ENCODE measurements at regions of chr2 and their contacts with region 1.

Region 1: GRCh38 chr2:43542285-43542937 is 53.4 kb downstream of the THADA start:
- DNase-seq: no peak
- H3K4me3 Mint-ChIP-seq: no peak overlapping the region
- H3K27ac Mint-ChIP-seq: no peak overlapping the region
- H3K4me1 Mint-ChIP-seq: peaks cover 19% of the 10 kb centered on the region
- H3K27me3 Mint-ChIP-seq: no peaks in the 10 kb centered on the region

Region 2: GRCh38 chr2:42944779-42945415 is 597.5 kb before region 1 on chr2:
- intact Hi-C with region 1: loop called (anchors 2 kb)
- DNase-seq: no peak
- H3K4me3 Mint-ChIP-seq: no peak overlapping the region
- H3K27ac Mint-ChIP-seq: no peak overlapping the region
- H3K4me1 Mint-ChIP-seq: peaks cover 3% of the 10 kb centered on the region
- H3K27me3 Mint-ChIP-seq: peaks cover 2% of the 10 kb centered on the region

Region 3: DNA sequence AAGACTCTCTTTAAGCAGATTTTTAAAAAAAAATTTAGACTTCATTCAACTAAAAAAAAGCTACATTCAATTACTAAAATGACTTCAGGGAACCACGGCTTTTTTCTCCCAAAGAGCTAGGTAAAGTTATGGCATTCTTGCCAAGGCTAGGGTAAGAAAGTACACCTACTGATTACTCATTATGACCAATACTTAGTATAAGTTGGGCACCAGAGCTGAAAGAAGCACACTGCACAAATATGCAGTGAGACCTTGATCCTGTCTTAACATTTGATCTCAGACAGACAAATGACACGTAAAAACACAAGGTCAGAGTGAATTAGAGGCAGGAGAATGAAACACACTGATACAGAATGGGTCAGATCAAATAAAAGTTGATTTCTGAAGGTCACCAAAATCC is 35.3 kb before region 1 on chr2:
- intact Hi-C with region 1: loop called (anchors 5 kb)
- DNase-seq: no peak
- H3K4me3 Mint-ChIP-seq: no peak overlapping the region
- H3K27ac Mint-ChIP-seq: peak overlapping the region; percentile 48
- H3K4me1 Mint-ChIP-seq: peaks cover 32% of the 10 kb centered on the region
- H3K27me3 Mint-ChIP-seq: no peaks in the 10 kb centered on the region